AG04450 (cell line): ENCODE measurements at regions of chr10 and their contacts with region 1.

Region 1: DNA sequence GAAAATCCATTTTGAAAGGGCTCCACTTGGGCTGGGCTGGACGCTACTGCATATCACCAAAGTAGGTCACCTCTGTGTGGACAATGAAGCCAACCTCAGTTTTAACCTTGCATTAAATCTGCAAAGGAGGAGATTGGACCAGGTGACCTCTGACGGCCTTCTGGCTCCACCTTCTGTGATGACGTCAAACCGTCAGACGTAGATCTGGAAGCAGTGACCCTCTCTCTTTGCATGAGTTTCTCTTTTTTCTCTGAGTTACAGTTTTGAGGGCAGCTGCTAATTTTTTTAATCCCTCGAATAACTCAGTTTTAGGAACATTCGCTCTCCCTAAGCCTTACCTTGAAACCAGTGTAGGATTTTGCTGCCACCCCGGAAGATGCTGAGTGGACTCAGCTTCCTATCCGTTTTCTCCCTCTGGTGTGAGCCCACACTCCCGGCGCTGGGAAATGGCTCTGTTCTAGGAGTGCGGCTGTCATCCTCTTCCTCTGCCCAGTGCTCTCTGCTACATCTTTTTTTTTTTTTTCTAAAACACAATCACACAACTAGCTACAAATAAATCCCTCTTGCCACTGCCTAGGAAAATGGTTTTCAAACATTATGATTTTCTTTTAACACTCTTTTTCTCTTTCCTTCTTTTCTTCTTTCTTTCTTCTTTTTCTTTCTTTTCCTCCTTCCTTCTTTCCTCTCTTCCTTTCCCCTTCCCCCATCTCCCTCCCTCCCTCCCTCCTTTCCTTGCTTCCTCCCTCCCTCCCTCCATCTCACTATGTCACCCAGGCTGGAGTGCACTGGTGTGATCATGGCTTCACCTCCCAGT is 27.7 kb upstream of the NMT2 start:
- DNase-seq: no peak
- H3K4me3 ChIP-seq: no peak overlapping the region
- H3K27ac ChIP-seq: no peak overlapping the region
- H3K27me3 ChIP-seq: no peaks in the 10 kb centered on the region
- CTCF ChIP-seq: no peak

Region 2: GRCh38 chr10:15182540-15183207 is 13.6 kb before region 1 on chr10:
- CTCF ChIA-PET with region 1: interaction called, 12 read pairs
- POLR2A ChIA-PET with region 1: no interaction called
- DNase-seq: no peak
- H3K4me3 ChIP-seq: no peak overlapping the region
- H3K27ac ChIP-seq: peak overlapping the region; percentile 55
- H3K27me3 ChIP-seq: no peaks in the 10 kb centered on the region
- CTCF ChIP-seq: no peak

Region 3: GRCh38 chr10:15374156-15374555 is 177.9 kb after region 1 on chr10:
- CTCF ChIA-PET with region 1: no interaction called
- POLR2A ChIA-PET with region 1: no interaction called
- DNase-seq: no peak
- H3K4me3 ChIP-seq: no peak overlapping the region
- H3K27ac ChIP-seq: no peak overlapping the region
- H3K27me3 ChIP-seq: no peaks in the 10 kb centered on the region
- CTCF ChIP-seq: no peak

Region 4: DNA sequence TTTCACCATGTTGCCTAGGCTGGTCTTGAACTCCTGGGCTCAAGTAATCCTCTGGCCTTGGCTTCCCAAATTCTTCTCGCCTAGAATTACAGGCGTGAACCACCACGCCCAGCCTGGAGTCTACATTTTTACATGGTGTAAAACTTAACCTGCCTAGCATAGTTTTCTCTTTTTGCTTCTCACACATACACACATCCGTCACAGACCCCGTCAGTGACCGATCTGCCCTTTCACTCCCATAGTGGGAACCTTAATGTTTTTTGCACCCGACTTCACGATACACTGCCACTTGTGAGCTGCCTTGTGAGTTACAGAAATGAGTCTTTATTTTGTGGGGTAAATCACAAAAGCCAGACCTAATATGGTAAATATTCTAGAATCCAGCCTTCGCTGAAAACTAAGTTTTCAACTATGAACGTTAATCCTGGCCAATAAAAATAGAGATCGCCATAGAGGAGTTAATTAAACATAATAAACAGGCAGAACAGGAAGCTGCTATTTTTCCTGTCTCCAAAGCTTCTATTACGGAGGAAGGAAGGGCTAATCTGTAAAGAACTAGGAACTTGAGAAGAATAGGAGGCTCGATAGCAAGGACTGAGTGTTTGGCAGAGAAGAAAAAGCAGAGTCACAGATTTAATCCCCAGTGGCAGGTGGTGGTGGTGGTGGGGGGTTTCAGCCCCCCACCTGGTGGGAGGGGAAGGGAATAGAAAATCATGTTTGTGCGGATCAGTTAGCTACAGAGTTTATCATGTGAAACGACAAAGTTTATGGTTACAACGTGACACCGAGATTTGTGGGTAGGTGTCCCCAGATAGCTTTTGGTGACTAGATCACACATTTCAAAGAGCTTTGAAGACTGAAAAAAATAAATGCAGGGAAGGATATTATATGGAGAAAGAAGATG is 189.6 kb after region 1 on chr10:
- CTCF ChIA-PET with region 1: no interaction called
- POLR2A ChIA-PET with region 1: no interaction called
- DNase-seq: no peak
- H3K4me3 ChIP-seq: no peak overlapping the region
- H3K27ac ChIP-seq: no peak overlapping the region
- H3K27me3 ChIP-seq: peaks cover 17% of the 10 kb centered on the region
- CTCF ChIP-seq: no peak

Region 5: DNA sequence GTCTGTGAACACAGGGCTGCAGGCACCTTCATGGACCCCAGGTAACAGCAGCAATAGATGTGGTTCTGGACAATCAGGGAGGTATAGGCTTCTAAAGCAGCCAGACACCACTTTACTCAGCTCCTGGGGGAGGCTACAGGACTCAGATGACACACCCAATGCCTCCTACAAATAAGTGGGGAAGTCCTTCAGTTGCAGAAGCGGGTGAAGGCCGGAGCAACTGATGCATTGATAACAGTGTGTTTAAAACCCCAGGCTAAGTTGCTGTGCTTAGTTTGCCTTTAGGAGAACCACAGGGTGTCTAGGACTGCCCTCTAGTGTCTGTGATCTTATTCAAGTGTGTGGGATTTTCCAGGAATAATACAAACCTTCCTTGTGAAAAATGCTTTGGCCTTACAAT is 529.4 kb after region 1 on chr10:
- CTCF ChIA-PET with region 1: interaction called, 15 read pairs
- POLR2A ChIA-PET with region 1: no interaction called
- DNase-seq: peak; percentile 38
- H3K4me3 ChIP-seq: no peak overlapping the region
- H3K27ac ChIP-seq: no peak overlapping the region
- H3K27me3 ChIP-seq: peaks cover 13% of the 10 kb centered on the region
- CTCF ChIP-seq: peak; percentile 75

Region 6: GRCh38 chr10:15789793-15790525 is 593.7 kb after region 1 on chr10:
- CTCF ChIA-PET with region 1: no interaction called
- POLR2A ChIA-PET with region 1: no interaction called
- DNase-seq: peak; percentile 73
- H3K4me3 ChIP-seq: no peak overlapping the region
- H3K27ac ChIP-seq: peak overlapping the region; percentile 34
- H3K27me3 ChIP-seq: no peaks in the 10 kb centered on the region
- CTCF ChIP-seq: no peak